Ovary (tissue), 10 donors: ENCODE measurements at regions of chr2 and their contacts with region 1.

Region 1: DNA sequence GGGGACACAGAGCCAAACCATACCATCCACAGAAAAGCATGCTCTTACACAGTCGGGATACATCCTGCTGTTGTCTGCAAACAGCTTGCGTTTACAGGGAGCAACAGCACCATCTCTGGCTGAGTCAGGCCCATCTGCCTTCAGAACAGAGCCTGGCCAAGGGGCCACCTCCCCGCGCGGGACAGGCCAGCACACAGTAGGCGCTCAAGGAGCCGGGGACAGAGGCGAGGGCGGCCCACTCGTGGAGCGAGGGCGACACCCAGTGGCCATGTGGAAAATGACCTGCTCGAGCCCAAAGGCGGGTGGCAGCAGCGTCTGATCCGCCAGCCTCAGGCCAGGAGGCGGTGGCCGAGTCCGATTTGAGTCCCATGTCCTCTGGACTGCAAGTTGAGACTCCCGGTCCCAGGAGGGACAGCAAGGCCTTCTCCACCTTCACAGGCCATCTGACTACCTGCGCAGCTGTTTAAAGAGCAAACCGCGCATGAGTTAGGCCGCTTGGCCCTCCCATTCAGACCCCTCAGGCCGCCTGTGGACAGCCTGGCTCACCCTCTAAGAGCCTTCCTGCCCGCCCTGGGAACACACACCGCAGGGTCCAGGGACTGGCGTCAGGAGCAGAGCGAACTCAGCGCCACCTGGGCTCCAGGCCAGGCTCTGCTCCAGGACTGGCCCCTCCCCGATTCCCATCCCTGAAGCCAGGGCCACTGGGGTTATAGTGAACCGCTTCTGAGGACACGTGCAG is 38.3 kb downstream of the TTC32 start:
- DNase-seq: peak; percentile 53 to 79 (median 60)
- H3K4me3 ChIP-seq: no peak overlapping the region
- H3K27ac ChIP-seq: no peak overlapping the region
- H3K4me1 ChIP-seq: peaks cover 2% of the 10 kb centered on the region
- H3K27me3 ChIP-seq: no peaks in the 10 kb centered on the region
- CTCF ChIP-seq: peak; percentile 89 to 92 (median 89)
- EP300 ChIP-seq: no peak
- POLR2A ChIP-seq: no peak

Region 2: DNA sequence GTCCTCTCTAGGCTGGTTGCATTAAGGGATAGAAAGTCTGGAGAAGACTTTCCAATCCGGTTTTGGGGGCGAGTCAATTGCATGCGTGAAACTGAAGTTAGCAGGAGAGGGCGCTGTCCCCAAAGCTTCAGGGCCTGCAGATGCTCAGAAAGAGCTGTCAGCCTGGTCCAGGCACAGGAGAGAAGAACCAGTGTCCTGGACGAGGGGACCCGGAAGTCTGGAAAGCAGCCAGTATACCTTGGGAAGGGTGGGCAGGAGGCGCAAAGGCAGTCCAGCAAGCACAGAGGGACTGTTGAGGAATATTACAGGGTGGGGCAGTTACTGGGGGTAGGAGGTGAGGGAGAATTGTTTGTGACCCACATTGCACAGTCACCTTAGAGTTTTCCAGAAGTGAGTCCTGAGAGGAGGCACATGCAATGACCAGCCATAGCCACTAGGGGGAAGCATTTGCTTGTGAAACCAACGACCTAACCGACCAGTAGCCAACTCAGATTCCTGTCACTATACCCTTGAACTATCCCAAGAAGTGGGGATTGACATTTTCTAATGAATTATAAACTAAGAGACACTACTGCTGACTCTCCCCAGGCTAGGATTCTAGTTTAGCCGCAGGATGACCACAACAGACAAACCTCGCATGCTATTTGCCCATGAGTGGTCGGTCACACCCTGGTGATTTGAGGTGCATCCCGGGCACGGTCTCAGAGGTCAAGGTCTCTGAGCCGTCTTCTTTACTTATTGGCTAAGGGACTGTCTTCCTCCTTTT is 1475.8 kb before region 1 on chr2:
- intact Hi-C with region 1: loop called in 2 of 4 experiments (anchors 10 kb)
- DNase-seq: peak; percentile 42 to 78 (median 68)
- H3K4me3 ChIP-seq: no peak overlapping the region
- H3K27ac ChIP-seq: no peak overlapping the region
- H3K4me1 ChIP-seq: no peaks in the 10 kb centered on the region
- H3K27me3 ChIP-seq: no peaks in the 10 kb centered on the region
- CTCF ChIP-seq: peak; percentile 43 to 79 (median 54)
- EP300 ChIP-seq: no peak
- POLR2A ChIP-seq: no peak

Region 3: DNA sequence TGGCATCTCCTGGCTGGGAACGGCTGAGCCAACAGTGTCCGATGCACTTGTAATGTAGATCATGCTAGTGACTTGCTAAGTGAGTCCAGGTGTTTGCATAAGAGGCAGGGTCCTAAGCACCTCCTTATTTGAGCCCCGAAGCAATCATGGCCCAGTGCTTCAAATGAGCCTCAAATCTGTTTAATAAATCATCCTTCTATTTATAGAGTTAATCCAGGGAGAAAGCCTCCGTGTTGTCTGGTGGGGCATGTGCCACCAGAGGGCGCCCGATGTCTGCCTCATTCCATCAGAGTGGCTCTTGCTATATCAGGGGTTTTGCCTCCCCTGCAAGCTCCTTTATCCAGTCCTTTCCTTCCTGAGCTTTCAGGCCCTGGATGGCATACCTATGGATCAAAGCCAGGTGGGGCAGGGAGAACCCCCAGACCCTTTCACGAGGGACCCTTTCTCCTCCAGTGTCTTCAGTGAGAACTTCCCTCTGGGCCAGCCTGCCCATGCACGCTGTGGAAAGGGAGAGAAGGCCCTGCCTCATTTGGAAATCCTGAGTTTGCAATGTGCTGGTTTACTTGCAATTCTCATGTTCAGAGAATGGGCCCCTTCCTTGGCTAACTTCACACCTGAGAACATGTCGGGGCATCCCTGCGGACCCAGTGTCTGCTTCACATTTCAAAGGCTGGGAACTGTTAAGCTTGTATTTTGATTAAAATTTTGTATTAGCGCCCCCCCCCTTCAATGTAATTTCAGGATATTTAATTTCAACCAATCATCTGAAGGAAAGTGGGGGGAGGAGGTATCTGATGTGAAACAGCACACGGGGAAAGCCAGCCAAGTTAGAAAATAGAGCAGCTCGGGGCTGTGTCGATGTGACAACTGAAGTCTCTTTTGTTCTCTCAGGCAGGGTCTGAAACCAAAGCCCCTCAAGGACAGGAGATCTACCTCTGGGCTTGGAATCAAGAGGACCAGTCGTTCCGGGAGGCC is 1342.7 kb before region 1 on chr2:
- intact Hi-C with region 1: loop called (anchors 5 to 10 kb)
- DNase-seq: peak; percentile 65 to 89 (median 83)
- H3K4me3 ChIP-seq: no peak overlapping the region
- H3K27ac ChIP-seq: no peak overlapping the region
- H3K4me1 ChIP-seq: no peaks in the 10 kb centered on the region
- H3K27me3 ChIP-seq: no peaks in the 10 kb centered on the region
- CTCF ChIP-seq: peak; percentile 55 to 73 (median 66)
- EP300 ChIP-seq: no peak
- POLR2A ChIP-seq: no peak

Region 4: DNA sequence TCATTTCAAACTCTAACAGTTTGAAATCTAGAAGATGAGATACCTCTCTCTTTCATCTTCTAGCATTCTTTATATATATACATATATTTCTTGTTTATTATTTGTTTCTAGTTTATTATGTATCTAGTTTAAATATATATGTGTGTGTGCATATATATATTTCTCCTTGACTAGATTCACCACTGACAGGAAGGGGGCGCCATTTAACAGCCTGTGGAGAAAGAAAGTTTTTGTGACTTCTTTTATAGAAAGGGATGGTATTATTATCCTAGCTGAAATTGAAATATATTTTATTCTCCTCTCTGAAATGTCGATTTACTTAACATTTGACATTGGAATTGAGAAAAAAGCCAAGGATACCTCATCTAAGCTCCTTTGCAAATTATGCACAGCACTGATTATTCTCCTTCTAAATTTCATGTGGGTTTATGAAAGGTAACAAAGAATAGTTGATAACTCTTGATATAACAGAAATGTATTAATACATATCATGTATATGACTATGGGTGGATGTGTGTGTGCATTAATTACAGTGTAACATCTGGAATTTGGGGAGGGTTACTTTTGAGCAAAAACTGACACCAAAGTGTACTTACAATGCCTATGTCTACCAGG is 1113.5 kb before region 1 on chr2:
- intact Hi-C with region 1: loop called in 2 of 4 experiments (anchors 5 to 10 kb)
- DNase-seq: peak; percentile 39 to 67 (median 54)
- H3K4me3 ChIP-seq: no peak overlapping the region
- H3K27ac ChIP-seq: no peak overlapping the region
- H3K4me1 ChIP-seq: no peaks in the 10 kb centered on the region
- H3K27me3 ChIP-seq: no peaks in the 10 kb centered on the region
- CTCF ChIP-seq: peak; percentile 53 to 71 (median 68)
- EP300 ChIP-seq: no peak
- POLR2A ChIP-seq: no peak

Region 5: DNA sequence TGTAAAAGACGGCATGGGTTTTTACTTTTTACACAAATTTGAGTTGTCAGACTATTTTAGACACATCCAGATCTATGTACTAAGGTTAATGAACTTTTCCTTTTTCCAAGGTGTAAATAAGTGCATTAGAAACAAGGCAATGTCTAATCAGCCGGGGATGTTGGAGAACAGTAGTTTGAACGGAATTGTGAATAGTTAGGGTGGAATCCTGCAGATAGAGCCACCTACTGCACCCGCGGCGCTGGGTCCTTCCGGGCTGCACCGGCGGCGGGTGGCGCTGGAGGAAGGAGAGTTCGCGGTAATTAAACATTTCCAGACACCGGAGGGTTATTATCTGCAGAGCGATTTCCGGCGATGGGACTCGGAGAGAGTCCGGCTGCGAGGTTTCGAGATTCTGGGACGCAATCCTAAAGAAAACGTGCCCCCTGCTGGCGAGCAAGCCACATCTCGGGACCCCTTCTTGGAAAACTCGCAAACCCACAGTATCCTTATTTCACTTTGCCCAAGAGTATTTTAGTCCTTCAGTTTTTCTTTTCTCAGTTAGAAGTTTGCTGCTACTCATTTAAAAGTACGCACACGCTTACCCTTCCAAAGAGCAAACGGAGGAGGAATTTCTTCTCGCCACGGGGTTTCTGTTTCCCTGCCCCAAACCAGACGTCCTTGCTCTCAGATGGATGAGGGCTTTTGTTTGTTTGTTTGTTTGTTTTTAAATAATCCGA is 500.6 kb before region 1 on chr2:
- intact Hi-C with region 1: loop called in 2 of 4 experiments (anchors 5 kb)
- DNase-seq: peak; percentile 81 to 88 (median 84)
- H3K4me3 ChIP-seq: peak overlapping the region; percentile 50
- H3K27ac ChIP-seq: no peak overlapping the region
- H3K4me1 ChIP-seq: peaks cover 4% of the 10 kb centered on the region
- H3K27me3 ChIP-seq: no peaks in the 10 kb centered on the region
- CTCF ChIP-seq: peak; percentile 60 to 74 (median 72)
- EP300 ChIP-seq: no peak
- POLR2A ChIP-seq: no peak

Region 6: GRCh38 chr2:19667085-19667484 is 196.4 kb before region 1 on chr2:
- intact Hi-C with region 1: no loop called
- DNase-seq: no peak
- H3K4me3 ChIP-seq: no peak overlapping the region
- H3K27ac ChIP-seq: no peak overlapping the region
- H3K4me1 ChIP-seq: no peaks in the 10 kb centered on the region
- H3K27me3 ChIP-seq: no peaks in the 10 kb centered on the region
- CTCF ChIP-seq: no peak
- EP300 ChIP-seq: no peak
- POLR2A ChIP-seq: no peak